Astrocyte of the cerebellum (primary cell): ENCODE measurements at regions of chr2 and their contacts with region 1.

Region 1: DNA sequence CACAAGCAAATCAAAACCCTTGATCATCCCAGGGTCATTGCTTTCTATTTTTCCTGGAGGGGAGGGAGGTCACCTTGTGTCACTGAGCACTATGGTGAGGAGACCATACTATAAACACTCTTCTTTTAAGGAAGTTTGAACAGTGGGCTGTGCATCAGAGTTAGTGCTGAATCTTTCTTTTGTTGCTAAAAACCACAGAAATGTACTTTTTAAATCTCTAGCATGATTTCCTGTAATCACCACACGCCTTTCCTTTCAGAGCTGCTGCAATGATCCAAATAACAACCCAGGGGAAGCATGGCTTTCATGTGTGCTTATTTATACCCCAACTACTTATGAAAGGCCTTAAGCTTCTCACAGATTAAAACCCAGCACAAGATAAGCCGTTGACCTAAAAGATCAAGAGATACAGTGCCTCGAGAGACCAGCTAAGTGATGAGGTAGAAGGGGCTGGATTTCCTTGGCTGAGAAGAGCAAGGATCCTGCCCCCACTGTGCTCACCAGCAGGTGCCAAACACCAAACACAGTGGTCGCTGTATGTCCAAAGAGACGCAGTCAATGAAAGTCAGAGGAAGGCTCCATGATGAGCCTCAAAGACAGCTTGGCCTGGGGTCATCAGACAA is 34.7 kb downstream of the TRABD2A start:
- DNase-seq: peak; percentile 64
- H3K4me3 ChIP-seq: no peak overlapping the region
- CTCF ChIP-seq: no peak

Region 2: DNA sequence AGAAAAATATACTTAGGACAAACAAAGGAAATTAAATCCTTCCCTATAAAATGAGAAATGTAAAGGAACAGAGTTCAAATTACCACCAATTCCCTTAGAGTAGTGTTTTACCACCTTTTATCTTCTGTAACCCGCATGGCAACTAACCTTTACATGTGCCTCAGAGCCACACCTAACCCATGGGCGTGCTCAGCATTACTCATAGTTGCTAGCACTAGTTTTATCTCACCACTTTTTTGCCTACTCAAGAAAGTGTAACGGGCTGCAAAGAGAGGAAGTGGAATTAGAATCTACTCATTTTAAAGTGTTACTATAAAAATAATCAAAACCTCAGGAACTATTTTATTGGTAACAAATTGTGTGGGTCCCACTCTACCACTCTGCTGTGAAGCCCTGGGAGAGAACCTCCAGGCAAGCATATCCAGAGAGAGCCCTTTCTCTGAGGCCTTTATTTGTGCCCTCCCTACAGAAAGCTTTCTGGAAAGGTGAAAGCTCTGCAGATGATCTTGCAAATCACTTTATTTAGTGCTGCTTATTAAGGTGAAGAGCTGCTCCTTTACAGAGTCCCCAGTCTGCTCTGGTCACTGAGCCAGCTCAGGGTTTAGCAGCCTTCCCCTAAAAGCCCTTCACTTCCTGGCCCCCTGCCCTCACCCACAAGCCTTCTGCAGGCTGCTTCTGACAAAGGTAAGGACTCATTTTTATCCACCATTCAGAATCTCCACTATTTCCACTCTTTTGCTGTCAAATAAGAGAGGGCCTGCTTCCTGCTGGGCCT is 64.0 kb before region 1 on chr2:
- in situ Hi-C with region 1: loop called (anchors 10 kb)
- DNase-seq: no peak
- H3K4me3 ChIP-seq: no peak overlapping the region
- CTCF ChIP-seq: no peak

Region 3: DNA sequence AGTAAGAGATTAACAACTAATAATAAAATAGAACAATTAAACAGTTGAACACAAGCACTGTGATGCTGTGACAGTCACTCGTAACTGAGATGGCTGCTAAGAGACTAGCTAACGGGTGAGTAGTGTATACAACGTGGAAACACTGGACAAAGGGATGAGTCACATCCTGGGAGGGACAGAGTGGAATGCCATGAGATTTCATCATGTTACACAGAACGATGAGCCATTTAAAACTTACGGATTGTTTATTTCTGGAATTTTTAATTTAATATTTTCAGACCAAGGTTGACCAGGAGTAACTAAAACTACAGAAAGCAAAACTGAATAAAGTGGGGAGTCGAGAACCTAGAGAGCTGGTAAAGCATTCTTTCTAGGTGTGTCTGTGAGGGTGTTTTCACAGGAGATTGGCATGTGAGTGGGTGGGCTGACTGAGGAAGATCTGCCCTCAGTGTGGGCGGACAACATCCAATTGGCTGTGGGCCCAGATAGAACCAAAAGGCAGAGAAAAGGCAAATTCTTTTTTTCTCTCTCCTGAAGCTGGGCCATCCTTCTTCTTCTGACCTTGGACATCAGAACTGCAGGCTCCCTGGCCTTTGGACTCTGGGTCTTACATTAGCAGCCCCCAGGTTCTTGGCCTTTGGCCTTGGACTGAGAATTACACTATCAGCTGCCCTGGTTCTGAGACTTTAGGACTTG is 73.9 kb after region 1 on chr2:
- in situ Hi-C with region 1: loop called (anchors 5 kb)
- DNase-seq: peak; percentile 89
- H3K4me3 ChIP-seq: peak overlapping the region; percentile 8
- CTCF ChIP-seq: no peak